Breast epithelium (tissue), 4 donors: ENCODE measurements at regions of chrX and their contacts with region 1.

Region 1: DNA sequence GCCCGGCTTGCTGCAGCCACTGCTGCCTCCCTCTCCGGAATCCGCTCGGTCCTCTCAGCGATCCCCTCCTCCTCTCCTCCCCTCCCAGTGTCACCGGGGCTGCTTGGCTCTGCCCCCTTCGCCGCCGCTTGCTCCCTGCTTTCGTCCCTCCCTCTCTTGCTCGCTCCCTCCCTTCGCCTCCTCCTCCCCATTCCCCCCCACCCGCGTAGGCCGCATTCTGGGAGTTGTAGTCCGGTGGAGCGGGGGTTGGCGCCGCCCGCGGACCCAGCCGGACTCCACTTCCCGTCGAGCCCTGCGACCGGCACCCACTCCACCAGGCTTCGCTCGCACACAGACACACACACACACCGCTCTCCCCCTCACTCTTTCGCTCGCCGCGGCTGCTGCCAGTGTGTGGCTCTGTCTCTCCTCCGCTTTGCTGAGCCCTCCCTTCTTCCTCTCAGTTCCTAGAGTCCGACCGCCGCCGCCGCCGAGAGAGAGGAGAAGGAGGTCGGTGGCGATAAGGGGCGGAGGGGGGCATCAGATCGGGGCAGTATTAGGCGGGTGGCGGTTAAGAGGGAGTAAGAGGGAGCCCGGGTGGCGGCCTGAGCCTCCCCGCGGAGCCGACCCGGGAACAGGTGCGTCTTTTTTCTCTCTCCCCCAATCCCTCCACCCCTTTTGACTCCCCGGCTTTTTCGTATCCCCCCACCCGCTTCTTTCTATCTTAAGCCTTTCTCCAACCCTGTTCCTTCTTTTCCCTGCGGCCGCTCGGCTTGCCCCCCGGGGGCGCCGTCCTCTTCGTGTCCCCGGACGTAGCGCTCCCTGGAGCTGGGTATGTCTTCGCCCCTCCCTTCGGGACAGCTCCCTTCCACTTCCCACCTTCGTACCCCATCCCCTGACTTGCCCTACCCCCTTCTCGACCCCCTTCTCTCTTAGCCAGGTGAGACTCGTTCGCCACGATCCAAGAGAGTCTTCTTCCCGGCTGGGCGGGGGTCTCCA is at the start of gene BCORL1:
- DNase-seq: peak; percentile 86 to 91
- H3K4me3 ChIP-seq: no peak within 1 kb of the TSS
- H3K27ac ChIP-seq: peak within 1 kb of the TSS; percentile 50 to 87
- H3K4me1 ChIP-seq: no peaks in the 10 kb centered on the region
- H3K27me3 ChIP-seq: peaks cover 0 to 14% of the 10 kb centered on the region in 2 donors
- CTCF ChIP-seq: no peak
- POLR2A ChIP-seq: peak; percentile 30
- total RNA-seq, gene BCORL1: 4.5 to 5.0 (median 4.9) TPM

Region 2: DNA sequence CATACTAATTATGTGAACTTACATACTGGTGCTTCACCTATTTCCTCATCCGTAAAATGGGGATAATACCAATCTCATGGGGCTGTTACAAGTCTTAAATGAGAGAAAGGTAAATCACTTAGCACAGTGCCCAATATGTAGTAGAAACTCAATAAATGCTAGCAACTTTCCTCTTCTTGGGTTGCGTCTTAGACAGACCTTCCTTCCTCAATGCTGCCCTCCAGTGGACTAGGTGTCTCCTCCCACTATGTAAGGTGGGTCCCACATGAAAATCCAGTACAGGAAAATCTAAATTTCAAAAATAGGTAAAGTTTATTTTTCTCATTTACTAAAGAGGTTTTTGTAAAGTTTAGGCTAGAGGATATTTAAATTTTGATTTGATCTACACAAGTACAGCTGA is 159.4 kb before region 1 on chrX:
- intact Hi-C with region 1: no loop called
- DNase-seq: no peak
- H3K4me3 ChIP-seq: no peak overlapping the region
- H3K27ac ChIP-seq: no peak overlapping the region
- H3K4me1 ChIP-seq: no peaks in the 10 kb centered on the region
- H3K27me3 ChIP-seq: peaks cover 0 to 5% of the 10 kb centered on the region in 2 donors
- CTCF ChIP-seq: peak in 2 of 3 donors; percentile 36
- POLR2A ChIP-seq: no peak

Region 3: DNA sequence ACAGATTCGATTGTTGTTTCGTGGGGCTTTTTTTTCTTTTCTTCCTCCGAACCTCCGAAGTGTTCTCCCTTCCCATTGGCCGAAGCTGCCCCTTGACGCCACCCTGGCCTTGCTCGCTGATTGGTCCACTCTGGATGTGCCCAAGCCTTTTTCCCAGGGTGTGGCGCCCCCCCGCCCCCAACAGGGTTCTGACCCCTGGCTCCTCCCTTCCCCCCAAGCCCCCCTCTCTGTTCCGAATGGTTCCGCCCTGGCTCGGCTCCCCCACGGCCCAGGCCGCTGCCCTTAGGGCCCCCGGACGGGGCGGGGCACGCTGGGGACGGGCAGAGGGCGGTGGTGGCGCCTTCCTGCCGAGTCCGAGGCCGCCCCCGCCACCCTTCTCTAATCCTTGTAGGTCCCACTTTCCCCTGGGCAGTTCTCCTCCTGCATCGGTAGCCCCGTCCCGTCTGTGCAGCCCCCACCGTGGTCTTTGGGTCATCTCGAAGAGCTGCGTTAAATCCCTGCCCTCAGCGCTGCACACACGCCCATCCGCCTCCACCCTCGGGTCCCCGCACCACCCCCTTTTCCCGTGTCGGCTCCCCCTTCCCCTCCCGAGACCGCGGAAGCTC is 51.0 kb before region 1 on chrX:
- intact Hi-C with region 1: loop called (anchors 10 kb)
- DNase-seq: peak; percentile 87 to 88
- H3K4me3 ChIP-seq: peak overlapping the region; percentile 51 to 74 (median 60)
- H3K27ac ChIP-seq: peak overlapping the region; percentile 80 to 91
- H3K4me1 ChIP-seq: no peaks in the 10 kb centered on the region
- H3K27me3 ChIP-seq: peaks cover 0 to 27% of the 10 kb centered on the region in 2 donors
- CTCF ChIP-seq: no peak
- POLR2A ChIP-seq: no peak

Region 4: DNA sequence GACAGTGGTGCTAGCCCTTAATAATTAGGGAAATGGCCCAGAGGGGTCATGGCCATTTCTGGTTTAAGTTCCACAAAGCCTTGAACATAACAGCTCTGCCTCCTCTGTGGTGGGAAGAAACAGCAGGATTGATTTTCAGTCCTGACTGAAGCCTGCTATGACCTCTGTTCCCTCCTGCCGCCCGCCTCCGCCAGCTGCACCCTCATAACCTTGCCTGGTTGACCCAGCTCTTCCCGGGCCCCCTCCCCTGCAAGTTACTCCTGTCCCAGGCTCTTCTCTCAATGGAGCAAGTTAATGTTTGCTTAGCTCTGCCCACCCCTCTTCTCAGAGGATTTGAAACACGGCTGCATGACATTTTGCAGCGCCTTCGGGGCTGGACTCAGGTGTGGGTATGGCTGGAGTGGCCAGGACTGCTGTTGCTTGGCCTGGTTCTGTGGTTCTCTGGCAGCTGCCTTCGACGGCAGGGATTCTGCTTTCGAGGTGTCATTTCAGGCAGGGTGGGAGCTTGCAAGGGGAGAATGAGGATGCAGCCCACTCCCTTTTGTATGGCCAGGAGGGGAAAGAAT is 27.2 kb after region 1 on chrX:
- intact Hi-C with region 1: no loop called
- DNase-seq: no peak
- H3K4me3 ChIP-seq: no peak overlapping the region
- H3K27ac ChIP-seq: no peak overlapping the region
- H3K4me1 ChIP-seq: no peaks in the 10 kb centered on the region
- H3K27me3 ChIP-seq: peaks cover 0 to 3% of the 10 kb centered on the region in 2 donors
- CTCF ChIP-seq: no peak
- POLR2A ChIP-seq: no peak

Region 5: GRCh38 chrX:130024127-130024526 is 41.6 kb after region 1 on chrX:
- intact Hi-C with region 1: no loop called
- DNase-seq: peak; percentile 38 to 51
- H3K4me3 ChIP-seq: no peak overlapping the region
- H3K27ac ChIP-seq: no peak overlapping the region
- H3K4me1 ChIP-seq: no peaks in the 10 kb centered on the region
- H3K27me3 ChIP-seq: peaks cover 0 to 6% of the 10 kb centered on the region in 2 donors
- CTCF ChIP-seq: no peak
- POLR2A ChIP-seq: no peak

Region 6: DNA sequence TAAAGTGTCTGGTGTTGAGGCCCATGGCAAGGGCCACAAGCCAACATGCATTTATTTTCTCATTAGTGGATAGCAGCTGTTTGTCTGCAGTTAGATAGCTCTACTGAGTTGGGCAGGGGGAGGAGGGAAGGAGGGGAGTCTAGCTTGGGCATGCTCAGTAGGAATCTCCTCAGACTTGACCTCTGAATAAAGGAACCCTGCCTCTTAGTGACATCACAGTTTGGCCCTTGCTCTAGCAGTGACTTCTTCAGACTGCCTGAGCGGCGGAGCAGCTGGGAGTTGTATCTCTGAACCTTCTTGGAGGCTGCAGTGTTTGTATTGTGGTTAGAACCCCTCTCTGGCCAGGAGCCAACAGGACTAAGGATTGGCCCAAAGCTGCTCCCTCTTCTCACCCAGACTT is 57.3 kb after region 1 on chrX:
- intact Hi-C with region 1: loop called (anchors 10 kb)
- DNase-seq: no peak
- H3K4me3 ChIP-seq: no peak overlapping the region
- H3K27ac ChIP-seq: no peak overlapping the region
- H3K4me1 ChIP-seq: no peaks in the 10 kb centered on the region
- H3K27me3 ChIP-seq: peaks cover 0 to 2% of the 10 kb centered on the region in 2 donors
- CTCF ChIP-seq: no peak
- POLR2A ChIP-seq: no peak